ENCODE measurements at regions of chr4 and their contacts with region 1.

Region 1: DNA sequence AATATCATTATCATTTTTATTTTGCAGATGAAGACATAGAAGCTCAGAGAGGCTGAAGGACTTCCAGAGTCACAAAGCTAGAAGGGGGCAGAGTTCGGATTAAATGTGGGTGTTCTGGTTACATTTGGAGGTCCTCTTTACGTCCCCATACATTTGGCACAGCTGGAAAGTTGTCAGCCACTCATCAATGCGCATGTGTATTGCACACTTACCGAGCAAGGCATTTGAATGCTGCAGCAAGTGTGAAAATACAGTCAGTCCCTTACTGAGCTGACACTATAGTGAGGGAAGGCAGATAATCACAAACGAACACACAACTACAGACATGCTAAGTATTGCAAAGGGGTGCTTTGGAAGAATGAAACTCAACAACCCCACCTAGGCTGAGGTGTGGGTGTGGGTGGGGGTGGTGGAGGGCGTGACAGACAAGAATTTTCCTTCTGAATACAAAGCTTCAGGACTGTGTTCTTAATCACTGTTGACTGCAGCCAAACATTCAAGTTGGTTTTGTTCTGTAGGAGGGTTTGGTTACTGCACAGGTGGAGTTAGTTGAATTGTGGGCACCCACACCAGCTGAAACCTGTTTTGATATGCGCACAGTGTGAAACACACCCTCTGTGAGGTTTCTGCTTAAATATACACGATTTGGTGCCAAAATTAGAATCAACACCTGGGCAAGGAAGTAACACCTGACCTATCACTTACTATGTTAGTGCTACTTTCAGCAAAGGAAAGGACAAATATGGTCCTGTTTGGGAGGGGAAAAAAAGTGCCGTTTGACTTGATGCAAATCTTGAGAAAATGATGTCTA is 72.4 kb downstream of the COQ2 start:
- DNase-seq: peak; percentile 86
- ATAC-seq: peak; percentile 87
- H3K4me3 ChIP-seq: peak overlapping the region in 2 of 5 experiments; percentile 2 to 45
- H3K4me3 Mint-ChIP-seq: peak overlapping the region; percentile 66
- H3K27ac ChIP-seq: peak overlapping the region; percentile 71 to 82
- H3K27ac Mint-ChIP-seq: peak overlapping the region; percentile 90
- H3K4me1 ChIP-seq: peaks cover 85 to 87% of the 10 kb centered on the region in 2 donors
- H3K4me1 Mint-ChIP-seq: peaks cover 83% of the 10 kb centered on the region
- H3K27me3 ChIP-seq: no peaks in the 10 kb centered on the region
- H3K27me3 Mint-ChIP-seq: no peaks in the 10 kb centered on the region
- CTCF ChIP-seq: no peak

Region 2: DNA sequence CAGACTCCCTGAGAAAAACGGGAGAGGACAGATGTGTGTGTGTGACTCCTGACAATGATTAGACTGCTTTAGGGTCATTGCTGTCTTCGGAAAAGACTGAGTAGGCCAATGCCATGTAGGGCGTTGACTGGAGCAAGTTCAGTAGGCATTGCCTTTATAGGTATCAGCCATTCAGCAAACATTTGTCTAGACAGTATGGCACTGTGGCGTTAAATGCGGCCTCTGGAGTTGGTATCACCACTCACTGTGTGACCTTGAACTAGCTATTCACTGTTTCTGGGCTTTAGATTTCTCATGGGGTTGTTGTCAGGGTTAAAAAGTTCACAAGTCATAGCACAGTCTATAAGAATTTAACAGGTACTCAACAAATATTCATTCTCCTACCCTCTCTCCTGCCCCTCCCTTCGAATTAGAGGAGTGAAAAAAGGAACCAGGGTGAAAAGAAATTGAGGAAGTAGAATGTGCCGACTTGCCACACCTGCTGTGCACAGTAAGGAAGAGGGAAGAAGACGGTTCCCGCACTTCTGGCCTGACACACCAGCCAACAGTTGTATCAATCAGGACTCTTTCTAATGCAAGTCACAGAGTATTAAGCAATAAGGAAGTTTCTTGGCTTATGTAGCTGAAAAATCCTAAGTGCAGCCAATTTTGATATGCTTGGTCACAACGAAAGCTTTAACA is 14.6 kb before region 1 on chr4:
- CTCF ChIA-PET with region 1: interaction called, 14 read pairs
- POLR2A ChIA-PET with region 1: interaction called, 6 read pairs
- intact Hi-C with region 1: loop called (anchors 1 kb)
- DNase-seq: peak; percentile 73
- ATAC-seq: peak; percentile 80
- H3K4me3 ChIP-seq: peak overlapping the region in 1 of 5 experiments; percentile 28
- H3K4me3 Mint-ChIP-seq: peak overlapping the region; percentile 42
- H3K27ac ChIP-seq: peak overlapping the region; percentile 27 to 55
- H3K27ac Mint-ChIP-seq: peak overlapping the region; percentile 70
- H3K4me1 ChIP-seq: peaks cover 21 to 29% of the 10 kb centered on the region in 2 donors
- H3K4me1 Mint-ChIP-seq: peaks cover 41% of the 10 kb centered on the region
- H3K27me3 ChIP-seq: no peaks in the 10 kb centered on the region
- H3K27me3 Mint-ChIP-seq: no peaks in the 10 kb centered on the region
- CTCF ChIP-seq: no peak

Measured in B cell (primary cell).